Right lobe of liver (tissue), 6 donors: ENCODE measurements at regions of chr19 and their contacts with region 1.

Region 1: DNA sequence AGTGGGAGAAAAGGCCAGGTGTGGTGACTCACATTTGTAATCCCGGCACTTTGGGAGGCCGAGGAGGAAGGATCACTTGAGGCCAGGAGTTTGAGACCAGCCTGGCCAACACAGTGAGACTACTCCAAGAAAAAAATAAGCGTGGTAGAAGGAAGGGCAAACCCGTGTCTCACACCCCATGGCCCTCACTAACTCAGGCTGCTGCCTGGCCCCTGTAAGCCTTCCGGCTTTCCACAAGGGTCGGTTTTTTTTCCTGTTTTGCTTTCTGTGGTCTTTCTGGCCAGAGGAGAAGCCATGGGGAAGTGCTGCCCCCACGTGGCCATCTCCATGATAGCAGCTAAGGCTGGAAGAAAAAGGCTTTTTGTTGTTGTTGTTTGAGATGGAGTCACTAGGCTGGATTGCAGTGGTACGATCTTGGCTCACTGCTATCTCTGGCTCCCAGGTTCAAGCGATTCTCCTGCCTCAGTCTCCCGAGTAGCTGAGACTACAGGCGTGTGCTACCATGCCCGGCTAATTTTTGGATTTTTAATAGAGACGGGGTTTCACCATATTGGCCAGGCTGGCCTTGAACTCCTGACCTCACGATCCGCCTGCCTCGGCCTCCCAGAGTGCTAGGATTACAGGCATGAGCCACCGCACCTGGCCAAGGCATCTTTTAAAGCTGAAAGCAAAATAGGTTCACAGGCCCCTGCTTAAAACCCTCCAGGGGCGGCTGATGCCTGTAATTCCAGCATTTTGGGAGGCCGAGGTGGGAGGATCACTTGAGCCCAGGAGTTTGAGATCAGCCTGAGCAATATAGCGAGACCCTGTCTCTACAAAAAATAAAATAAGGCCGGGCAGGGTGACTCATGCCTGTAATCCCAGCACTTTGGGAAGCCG is 7.5 kb upstream of the ARHGEF18 start:
- DNase-seq: peak; percentile 66 to 79 (median 75)
- ATAC-seq: peak; percentile 69 to 88 (median 76)
- H3K4me3 ChIP-seq: no peak overlapping the region
- H3K27ac ChIP-seq: no peak overlapping the region
- H3K4me1 ChIP-seq: peaks cover 0 to 3% (median under 1%) of the 10 kb centered on the region in 4 donors
- H3K27me3 ChIP-seq: no peaks in the 10 kb centered on the region
- CTCF ChIP-seq: peak; percentile 90 to 97 (median 94)
- POLR2A ChIP-seq: no peak

Region 2: GRCh38 chr19:7104747-7105447 is 236.3 kb before region 1 on chr19:
- intact Hi-C with region 1: loop called (anchors 5 to 10 kb)
- DNase-seq: no peak
- ATAC-seq: peak; percentile 20 to 51 (median 27)
- H3K4me3 ChIP-seq: no peak overlapping the region
- H3K27ac ChIP-seq: no peak overlapping the region
- H3K4me1 ChIP-seq: no peaks in the 10 kb centered on the region
- H3K27me3 ChIP-seq: no peaks in the 10 kb centered on the region
- CTCF ChIP-seq: no peak
- POLR2A ChIP-seq: no peak

Region 3: DNA sequence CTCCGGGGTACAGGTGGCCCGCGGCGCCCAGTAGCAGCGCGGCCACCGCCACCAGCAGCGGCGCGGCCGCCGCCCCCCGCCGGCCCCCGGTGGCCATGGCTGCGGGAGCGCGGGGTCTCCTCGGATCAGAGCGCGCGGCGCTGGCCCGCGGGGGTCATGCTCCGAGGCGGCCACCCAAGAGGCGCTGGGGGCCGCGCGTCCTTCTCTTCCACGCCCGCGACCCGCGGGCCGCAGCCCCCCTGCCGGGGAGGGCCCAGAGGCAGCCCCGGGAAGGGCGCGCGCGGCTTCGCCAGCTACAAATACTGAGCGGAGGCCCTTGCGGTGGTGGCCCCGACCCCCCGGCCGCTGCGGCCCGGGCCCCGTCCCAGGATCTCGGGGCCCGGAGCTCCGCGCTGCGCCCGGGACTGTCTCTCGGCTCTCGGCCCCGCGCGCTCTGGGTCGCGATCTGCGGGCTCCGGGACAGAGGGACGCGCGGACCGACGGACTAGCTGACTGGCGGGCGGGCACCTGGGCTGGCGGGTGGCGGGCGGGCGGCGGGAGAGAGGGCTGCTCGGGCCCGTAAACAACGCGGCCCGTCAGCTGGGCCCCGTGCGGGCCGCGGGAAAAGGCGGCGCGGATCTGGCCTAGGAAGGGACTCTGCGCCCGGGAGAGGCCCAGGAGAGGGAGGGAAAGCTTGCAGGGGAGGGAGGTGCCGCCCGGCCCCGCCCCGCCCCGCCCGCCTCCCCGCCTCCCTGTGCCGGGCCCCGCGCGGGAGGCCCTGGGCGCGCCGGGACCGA is 47.2 kb before region 1 on chr19 and contains the start of gene INSR:
- intact Hi-C with region 1: no loop called
- DNase-seq: peak; percentile 88 to 94 (median 94)
- ATAC-seq: peak; percentile 76 to 94 (median 90)
- H3K4me3 ChIP-seq: peak within 1 kb of the TSS; percentile 82 to 96 (median 90)
- H3K27ac ChIP-seq: peak within 1 kb of the TSS; percentile 99
- H3K4me1 ChIP-seq: peaks cover 0 to 21% (median 6%) of the 10 kb centered on the region in 4 donors
- H3K27me3 ChIP-seq: no peaks in the 10 kb centered on the region
- CTCF ChIP-seq: no peak
- POLR2A ChIP-seq: peak; percentile 73
- total RNA-seq, gene INSR: 82.7 to 121 (median 106) TPM

Region 4: DNA sequence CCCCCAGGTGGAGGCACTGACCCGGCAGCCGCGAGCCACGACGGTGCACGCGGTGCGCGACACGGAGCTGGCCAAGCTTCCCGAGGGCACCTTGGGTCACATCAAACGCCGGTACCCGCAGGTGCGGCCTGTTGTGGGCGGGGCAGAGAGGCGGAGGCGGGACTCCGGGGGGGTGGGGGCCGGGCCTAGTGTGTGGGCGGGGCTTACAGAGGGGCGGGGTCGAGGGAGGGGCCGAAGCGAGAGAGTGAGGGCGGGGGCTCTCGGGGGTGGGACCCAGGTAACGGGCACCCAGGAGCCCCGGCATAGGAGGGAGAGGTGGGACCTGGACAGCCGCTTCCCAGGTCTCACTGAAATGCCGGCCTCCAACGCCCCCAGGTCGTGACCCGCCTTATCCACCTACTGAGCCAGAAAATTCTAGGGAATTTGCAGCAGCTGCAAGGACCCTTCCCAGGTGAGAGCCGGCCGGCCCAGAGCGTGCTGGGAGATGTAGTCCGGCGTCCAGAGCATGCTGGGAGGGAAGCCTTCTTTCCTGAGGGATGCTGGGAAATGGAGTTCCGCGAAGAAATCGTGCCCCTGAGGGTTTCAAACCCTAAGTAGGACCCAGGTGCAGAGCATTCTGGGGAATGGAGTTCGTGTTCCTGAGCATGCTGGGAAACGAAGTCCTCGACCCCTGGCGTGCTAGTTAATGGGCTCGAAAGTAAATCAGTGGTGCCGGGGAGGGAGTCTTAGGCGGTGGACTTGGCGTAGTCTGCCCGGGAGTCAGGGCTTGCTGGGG is 210.0 kb after region 1 on chr19:
- intact Hi-C with region 1: no loop called
- DNase-seq: peak in 2 of 3 donors; percentile 77 to 88
- ATAC-seq: peak; percentile 84 to 96 (median 86)
- H3K4me3 ChIP-seq: peak overlapping the region in 2 of 3 donors; percentile 25 to 61
- H3K27ac ChIP-seq: no peak overlapping the region
- H3K4me1 ChIP-seq: no peaks in the 10 kb centered on the region
- H3K27me3 ChIP-seq: no peaks in the 10 kb centered on the region
- CTCF ChIP-seq: no peak
- POLR2A ChIP-seq: no peak